ENCODE measurements at regions of chr1 and their contacts with region 1.

Region 1: GRCh38 chr1:192038567-192038966 is 119.7 kb upstream of the RGS18 start:
- DNase-seq: no peak
- ATAC-seq: no peak
- H3K4me3 ChIP-seq: no peak overlapping the region
- H3K4me3 Mint-ChIP-seq: no peak overlapping the region
- H3K27ac ChIP-seq: no peak overlapping the region
- H3K27ac Mint-ChIP-seq: no peak overlapping the region
- H3K4me1 ChIP-seq: no peaks in the 10 kb centered on the region
- H3K4me1 Mint-ChIP-seq: no peaks in the 10 kb centered on the region
- H3K27me3 ChIP-seq: no peaks in the 10 kb centered on the region
- H3K27me3 Mint-ChIP-seq: no peaks in the 10 kb centered on the region
- CTCF ChIP-seq: no peak

Region 2: DNA sequence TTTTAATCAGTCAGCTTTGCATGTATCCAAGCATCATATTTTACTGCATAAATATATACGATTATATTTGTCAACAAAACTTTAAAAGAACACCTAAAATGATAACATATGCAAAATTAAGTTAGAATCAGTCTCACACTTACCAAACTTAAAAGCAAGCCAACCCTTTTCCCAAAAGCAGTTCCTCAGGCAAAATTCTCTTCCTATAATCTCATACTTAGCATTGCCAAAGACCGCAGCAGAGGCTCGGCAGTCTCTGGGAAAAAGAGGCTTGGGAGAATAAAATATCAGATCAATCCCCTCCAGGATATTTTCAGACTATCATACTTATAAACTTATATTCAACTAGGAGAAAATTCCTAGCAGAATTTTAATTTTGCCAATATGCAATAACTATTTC is 26.5 kb after region 1 on chr1:
- CTCF ChIA-PET with region 1: no interaction called
- POLR2A ChIA-PET with region 1: no interaction called
- intact Hi-C with region 1: loop called in 1 of 2 experiments (anchors 1 kb)
- DNase-seq: no peak
- ATAC-seq: no peak
- H3K4me3 ChIP-seq: no peak overlapping the region
- H3K4me3 Mint-ChIP-seq: no peak overlapping the region
- H3K27ac ChIP-seq: no peak overlapping the region
- H3K27ac Mint-ChIP-seq: no peak overlapping the region
- H3K4me1 ChIP-seq: no peaks in the 10 kb centered on the region
- H3K4me1 Mint-ChIP-seq: no peaks in the 10 kb centered on the region
- H3K27me3 ChIP-seq: no peaks in the 10 kb centered on the region
- H3K27me3 Mint-ChIP-seq: no peaks in the 10 kb centered on the region
- CTCF ChIP-seq: no peak

Measured in CD4-positive, alpha-beta T cell (primary cell).